Body of pancreas (tissue), 4 donors: ENCODE measurements at regions of chr9 and their contacts with region 1.

Region 1: DNA sequence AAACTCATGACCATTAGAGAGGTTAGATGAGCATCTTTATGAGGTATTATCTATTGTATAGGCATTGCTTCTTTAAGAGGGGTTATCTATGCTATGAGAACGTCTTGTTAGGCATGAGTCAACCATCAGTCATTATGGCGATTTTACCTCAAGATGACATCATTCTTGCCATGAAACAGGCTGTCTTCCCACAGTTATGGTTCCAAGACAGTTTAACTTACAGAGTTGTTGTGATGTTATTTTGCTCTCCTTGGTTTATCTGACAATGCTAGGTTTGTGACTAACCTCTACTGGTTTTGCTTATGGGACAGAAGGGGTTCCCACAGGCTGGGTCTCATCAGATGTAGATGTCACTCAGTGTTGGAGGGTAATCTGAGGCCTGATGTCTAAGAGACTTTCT is 1864.7 kb upstream of the ACO1 start:
- DNase-seq: no peak
- ATAC-seq: no peak
- H3K4me3 ChIP-seq: no peak overlapping the region
- H3K27ac ChIP-seq: no peak overlapping the region
- H3K4me1 ChIP-seq: no peaks in the 10 kb centered on the region
- H3K27me3 ChIP-seq: no peaks in the 10 kb centered on the region
- CTCF ChIP-seq: no peak
- POLR2A ChIP-seq: no peak

Region 2: DNA sequence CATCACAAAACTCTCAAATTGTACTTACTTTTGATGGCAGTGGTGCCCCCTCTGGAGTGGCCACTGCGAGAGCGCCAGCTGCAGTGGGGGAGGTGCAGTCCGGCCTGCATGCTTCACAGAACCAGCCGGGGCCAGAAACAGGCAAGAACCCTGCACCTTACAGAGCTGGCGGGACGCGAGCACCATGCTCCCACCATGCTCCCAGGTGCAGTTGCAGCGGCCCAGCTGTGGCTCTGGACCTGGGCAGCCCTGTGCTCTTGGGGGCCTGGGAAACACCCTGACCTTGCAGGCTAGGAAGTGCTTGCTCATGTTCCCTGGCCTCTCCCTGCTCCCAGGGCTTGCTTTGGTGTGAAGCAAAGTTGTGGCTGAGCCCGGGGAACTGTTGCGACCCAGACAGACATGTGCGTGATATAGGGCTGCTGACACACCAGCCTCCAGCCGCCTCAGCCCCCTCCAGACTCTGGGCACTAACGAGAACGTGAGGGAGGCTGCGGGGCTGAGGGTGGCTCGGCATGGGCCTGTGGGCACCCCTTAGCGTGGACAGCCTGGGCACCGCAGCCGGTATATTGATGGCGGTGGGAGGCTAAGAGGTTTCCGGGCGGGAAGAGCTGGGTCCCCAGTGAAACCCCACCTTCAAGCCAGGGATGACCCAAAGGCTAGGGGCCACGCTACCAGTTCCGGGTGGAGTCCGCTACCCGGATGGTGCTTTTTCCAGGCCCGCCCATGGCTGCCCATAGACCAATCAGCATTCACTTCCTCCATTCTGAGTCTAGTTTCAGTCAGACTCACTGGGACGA is 54.8 kb after region 1 on chr9:
- intact Hi-C with region 1: loop called (anchors 10 kb)
- DNase-seq: peak in 1 of 4 donors; percentile 10
- ATAC-seq: no peak
- H3K4me3 ChIP-seq: no peak overlapping the region
- H3K27ac ChIP-seq: no peak overlapping the region
- H3K4me1 ChIP-seq: no peaks in the 10 kb centered on the region
- H3K27me3 ChIP-seq: no peaks in the 10 kb centered on the region
- CTCF ChIP-seq: no peak
- POLR2A ChIP-seq: no peak

Region 3: DNA sequence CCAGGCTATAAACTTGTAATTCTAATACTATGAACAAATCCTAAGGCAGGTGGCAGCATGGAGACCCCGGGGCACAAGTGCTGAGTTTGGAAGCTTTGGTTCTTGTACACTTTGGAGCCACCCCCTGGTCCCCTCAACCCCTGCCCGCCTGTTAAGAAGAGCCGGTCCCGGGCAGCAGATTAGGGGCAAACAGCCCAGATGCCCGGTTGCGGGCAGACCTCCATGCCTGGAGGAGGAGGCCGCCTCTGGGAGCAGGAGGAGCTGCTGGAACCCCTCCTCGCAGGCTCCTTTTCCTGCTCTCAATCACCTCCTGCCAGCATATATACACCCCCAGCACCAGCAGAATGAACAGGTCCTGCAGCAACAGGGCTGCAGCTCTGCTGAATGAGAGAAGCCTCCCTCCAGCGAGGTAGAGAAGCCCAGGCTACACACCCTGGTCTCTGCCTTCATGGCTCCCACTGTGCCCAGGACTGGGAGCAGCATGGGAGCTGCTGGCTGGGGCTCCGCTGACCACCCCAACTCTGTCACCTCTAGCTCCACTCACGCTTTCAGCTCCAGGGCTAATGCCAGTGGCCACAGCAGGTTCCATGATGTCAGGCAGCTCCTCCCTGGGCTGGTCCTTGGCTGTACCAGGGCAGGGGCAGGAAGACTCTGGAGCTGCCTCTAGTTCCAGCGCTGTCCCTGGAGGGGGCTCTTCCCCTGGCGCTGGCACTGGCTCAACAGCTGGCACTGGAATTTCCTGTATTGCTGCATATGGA is 151.2 kb after region 1 on chr9:
- intact Hi-C with region 1: no loop called
- DNase-seq: no peak
- ATAC-seq: no peak
- H3K4me3 ChIP-seq: no peak overlapping the region
- H3K27ac ChIP-seq: no peak overlapping the region
- H3K4me1 ChIP-seq: no peaks in the 10 kb centered on the region
- H3K27me3 ChIP-seq: no peaks in the 10 kb centered on the region
- CTCF ChIP-seq: no peak
- POLR2A ChIP-seq: no peak

Region 4: DNA sequence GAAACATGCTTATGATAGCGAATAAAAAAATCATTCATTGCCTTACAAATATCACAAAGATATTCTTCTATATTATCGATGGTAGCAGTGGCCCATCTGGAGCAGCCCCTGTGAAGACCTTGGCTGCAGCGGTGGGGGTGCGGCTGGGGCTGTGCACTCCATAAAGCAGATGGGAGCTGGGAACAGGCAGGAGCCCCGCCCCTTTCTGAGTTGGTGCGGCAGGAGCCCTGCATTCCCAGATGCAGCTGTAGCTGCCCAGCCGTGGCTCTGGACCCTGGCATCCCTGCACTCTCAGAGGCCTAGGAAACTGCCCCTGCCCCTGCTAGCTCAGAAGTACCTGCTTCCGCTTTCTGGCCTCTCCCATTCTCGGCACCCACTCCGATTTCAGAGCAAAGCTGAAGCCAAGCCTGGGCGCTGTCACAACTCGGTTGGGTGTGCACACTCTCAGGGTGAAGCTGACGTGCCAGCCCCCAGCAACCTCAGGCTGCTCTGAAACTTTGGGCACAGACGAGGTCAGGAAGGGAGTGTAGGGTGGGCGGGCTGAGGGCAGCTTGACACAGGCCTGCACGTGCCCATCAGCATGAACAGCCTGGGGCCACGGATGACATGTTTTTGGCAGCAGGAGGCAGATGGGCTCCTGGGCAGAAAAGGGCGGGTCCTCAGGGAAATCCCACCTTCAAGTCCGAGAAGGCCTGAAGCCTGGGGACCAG is 423.8 kb after region 1 on chr9:
- intact Hi-C with region 1: no loop called
- DNase-seq: no peak
- ATAC-seq: no peak
- H3K4me3 ChIP-seq: no peak overlapping the region
- H3K27ac ChIP-seq: no peak overlapping the region
- H3K4me1 ChIP-seq: no peaks in the 10 kb centered on the region
- H3K27me3 ChIP-seq: no peaks in the 10 kb centered on the region
- CTCF ChIP-seq: no peak
- POLR2A ChIP-seq: no peak